PC-3 (cell line): ENCODE measurements at regions of chr7 and their contacts with region 1.

Region 1: GRCh38 chr7:101390901-101391301 is 28.2 kb downstream of the COL26A1 start:
- DNase-seq: no peak
- ATAC-seq: no peak
- H3K4me3 ChIP-seq: no peak overlapping the region
- H3K27ac ChIP-seq: no peak overlapping the region
- H3K4me1 ChIP-seq: no peaks in the 10 kb centered on the region
- H3K27me3 ChIP-seq: no peaks in the 10 kb centered on the region
- CTCF ChIP-seq: no peak

Region 2: DNA sequence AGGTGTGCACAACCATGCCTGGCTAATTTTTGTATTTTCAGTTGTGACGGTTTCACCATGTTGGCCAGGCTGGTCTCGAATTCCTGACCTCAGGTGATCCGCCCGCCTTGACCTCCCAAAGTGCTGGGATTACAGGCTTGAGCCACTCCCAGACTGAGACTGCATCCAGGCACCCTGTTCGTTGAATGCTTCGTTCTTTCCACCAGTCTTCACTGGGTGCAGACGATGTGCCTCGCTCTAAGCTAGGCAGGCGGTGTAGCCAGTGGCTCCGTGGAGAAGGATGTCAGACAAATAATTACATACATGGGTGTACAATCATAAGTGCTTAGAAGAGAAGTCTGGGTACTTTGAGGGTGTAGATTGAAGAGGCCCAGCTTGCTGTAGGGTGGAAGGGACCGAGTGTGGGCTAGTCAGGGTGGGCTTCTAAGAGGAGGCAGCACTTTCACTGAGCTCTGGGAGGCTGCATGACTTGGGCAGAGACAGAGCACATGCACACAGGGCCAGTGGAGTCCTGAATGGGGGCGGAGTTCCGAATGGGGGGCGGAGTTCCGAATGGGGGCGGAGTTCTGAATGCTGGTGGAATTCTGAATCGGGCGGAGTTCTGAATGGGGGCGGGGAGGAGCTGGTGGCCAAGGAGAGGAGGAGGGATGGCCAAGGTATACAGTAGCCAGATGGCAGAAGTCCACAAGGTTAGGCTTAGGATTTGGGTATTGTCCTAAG is 46.1 kb after region 1 on chr7:
- CTCF ChIA-PET with region 1: interaction called, 12 read pairs
- POLR2A ChIA-PET with region 1: no interaction called
- intact Hi-C with region 1: no loop called
- DNase-seq: peak; percentile 31
- ATAC-seq: peak; percentile 53; the same call in 1 of the 2 replicates
- H3K4me3 ChIP-seq: no peak overlapping the region
- H3K27ac ChIP-seq: no peak overlapping the region
- H3K4me1 ChIP-seq: peaks cover under 1% of the 10 kb centered on the region; the same call in 1 of the 2 replicates
- H3K27me3 ChIP-seq: peaks cover 9% of the 10 kb centered on the region; the same call in 1 of the 2 replicates
- CTCF ChIP-seq: no peak

Region 3: DNA sequence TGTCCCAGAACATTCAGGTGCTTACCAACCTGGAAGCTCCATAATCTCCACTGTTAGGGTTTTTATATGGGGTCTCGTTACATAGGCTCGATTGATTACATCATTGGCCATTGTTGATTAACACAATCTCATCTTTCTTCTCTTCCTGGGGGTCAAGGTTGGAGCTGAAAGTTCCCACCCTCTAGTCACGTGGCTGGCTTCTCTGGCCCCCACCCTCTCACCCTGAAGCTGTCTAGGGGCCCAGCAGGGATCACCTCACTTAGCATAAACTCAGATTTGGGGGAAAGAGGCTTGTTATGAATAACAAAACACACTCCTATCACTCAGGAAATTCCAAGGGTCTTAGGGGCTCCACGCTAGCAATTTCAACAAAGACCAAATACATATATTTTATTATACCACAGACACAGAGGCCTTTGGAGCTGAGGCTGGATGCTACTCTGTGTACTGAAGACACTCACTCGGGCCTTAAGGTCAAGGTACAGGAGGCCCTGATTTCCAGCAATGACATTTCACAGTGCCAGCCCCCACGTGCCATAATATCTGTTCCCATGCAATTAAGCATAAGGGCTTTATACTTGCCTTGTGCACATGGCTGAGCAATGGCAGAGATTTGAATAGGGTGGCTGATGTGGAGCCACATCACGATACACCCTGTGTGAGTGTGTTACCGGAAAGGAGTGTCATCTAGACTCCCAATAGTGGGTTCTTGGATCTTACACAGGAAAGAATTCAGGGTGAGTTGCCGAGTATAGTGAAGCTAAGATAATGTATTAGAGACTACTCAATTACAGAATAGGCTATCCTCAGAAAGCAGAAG is 80.0 kb after region 1 on chr7:
- CTCF ChIA-PET with region 1: no interaction called
- POLR2A ChIA-PET with region 1: no interaction called
- intact Hi-C with region 1: no loop called
- DNase-seq: no peak
- ATAC-seq: no peak
- H3K4me3 ChIP-seq: no peak overlapping the region
- H3K27ac ChIP-seq: no peak overlapping the region
- H3K4me1 ChIP-seq: no peaks in the 10 kb centered on the region
- H3K27me3 ChIP-seq: no peaks in the 10 kb centered on the region
- CTCF ChIP-seq: no peak

Region 4: GRCh38 chr7:101518314-101518713 is 127.4 kb after region 1 on chr7:
- CTCF ChIA-PET with region 1: no interaction called
- POLR2A ChIA-PET with region 1: no interaction called
- intact Hi-C with region 1: no loop called
- DNase-seq: no peak
- ATAC-seq: no peak
- H3K4me3 ChIP-seq: no peak overlapping the region
- H3K27ac ChIP-seq: no peak overlapping the region
- H3K4me1 ChIP-seq: no peaks in the 10 kb centered on the region
- H3K27me3 ChIP-seq: no peaks in the 10 kb centered on the region
- CTCF ChIP-seq: no peak